IMR-90 (cell line): ENCODE measurements at regions of chr12 and their contacts with region 1.

Region 1: GRCh38 chr12:94187361-94187760 is 39.0 kb downstream of the PLXNC1 start:
- DNase-seq: no peak
- ATAC-seq: no peak
- H3K4me3 ChIP-seq: peak overlapping the region; percentile 4; the same call in 1 of the 2 replicates
- H3K27ac ChIP-seq: no peak overlapping the region
- H3K4me1 ChIP-seq: 0 out of 2 replicates have a peak, but pooled peaks cover 2% of the 10 kb centered on the region
- H3K27me3 ChIP-seq: peaks cover 24% of the 10 kb centered on the region
- CTCF ChIP-seq: no peak
- POLR2A ChIP-seq: no peak
- RAD21 ChIP-seq: no peak

Region 2: DNA sequence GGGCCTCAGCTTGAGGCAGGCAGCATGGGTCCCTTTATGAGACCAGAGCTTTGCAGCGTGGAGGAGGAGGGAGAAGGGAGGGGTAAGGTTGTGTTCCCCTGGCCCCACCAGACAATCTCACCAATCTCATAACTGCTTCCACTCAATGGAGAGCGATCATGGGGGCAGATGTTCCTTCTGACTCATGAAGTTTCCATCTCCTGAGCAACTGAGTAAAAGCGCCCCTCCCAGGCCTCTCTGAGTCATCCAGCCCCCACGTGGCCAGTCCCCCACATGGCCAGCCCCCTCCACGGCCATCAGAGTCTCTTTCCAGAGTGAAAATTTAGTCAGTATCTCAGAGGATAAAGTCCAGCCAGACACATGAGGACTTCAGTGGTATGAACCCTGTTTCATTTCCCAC is 78.2 kb before region 1 on chr12:
- CTCF ChIA-PET with region 1: no interaction called
- POLR2A ChIA-PET with region 1: no interaction called
- dilution Hi-C with region 1: no loop called
- in situ Hi-C with region 1: no loop called
- intact Hi-C with region 1: no loop called
- DNase-seq: peak; percentile 71
- ATAC-seq: peak; percentile 72
- H3K4me3 ChIP-seq: no peak overlapping the region
- H3K27ac ChIP-seq: no peak overlapping the region
- H3K4me1 ChIP-seq: peaks cover 1% of the 10 kb centered on the region; the same call in 1 of the 2 replicates
- H3K27me3 ChIP-seq: no peaks in the 10 kb centered on the region; the same call in 1 of the 2 replicates
- CTCF ChIP-seq: no peak
- POLR2A ChIP-seq: no peak
- RAD21 ChIP-seq: no peak

Region 3: DNA sequence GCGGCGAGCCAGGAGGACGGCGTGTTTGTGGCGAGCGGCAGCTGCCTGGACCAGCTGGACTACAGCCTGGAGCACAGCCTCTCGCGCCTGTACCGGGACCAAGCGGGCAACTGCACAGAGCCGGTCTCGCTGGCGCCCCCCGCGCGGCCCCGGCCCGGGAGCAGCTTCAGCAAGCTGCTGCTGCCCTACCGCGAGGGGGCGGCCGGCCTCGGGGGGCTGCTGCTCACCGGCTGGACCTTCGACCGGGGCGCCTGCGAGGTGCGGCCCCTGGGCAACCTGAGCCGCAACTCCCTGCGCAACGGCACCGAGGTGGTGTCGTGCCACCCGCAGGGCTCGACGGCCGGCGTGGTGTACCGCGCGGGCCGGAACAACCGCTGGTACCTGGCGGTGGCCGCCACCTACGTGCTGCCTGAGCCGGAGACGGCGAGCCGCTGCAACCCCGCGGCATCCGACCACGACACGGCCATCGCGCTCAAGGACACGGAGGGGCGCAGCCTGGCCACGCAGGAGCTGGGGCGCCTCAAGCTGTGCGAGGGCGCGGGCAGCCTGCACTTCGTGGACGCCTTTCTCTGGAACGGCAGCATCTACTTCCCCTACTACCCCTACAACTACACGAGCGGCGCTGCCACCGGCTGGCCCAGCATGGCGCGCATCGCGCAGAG is 38.1 kb before region 1 on chr12:
- CTCF ChIA-PET with region 1: no interaction called
- POLR2A ChIA-PET with region 1: no interaction called
- dilution Hi-C with region 1: no loop called
- in situ Hi-C with region 1: no loop called
- intact Hi-C with region 1: no loop called
- DNase-seq: peak; percentile 23
- ATAC-seq: peak; percentile 64
- H3K4me3 ChIP-seq: peak overlapping the region; percentile 67
- H3K27ac ChIP-seq: no peak overlapping the region
- H3K4me1 ChIP-seq: no peaks in the 10 kb centered on the region; the same call in none of the 2 replicates
- H3K27me3 ChIP-seq: peaks cover 88% of the 10 kb centered on the region
- CTCF ChIP-seq: 0 out of 2 replicates have a peak, but pooled peaks have one; percentile 18
- POLR2A ChIP-seq: no peak
- RAD21 ChIP-seq: no peak

Region 4: DNA sequence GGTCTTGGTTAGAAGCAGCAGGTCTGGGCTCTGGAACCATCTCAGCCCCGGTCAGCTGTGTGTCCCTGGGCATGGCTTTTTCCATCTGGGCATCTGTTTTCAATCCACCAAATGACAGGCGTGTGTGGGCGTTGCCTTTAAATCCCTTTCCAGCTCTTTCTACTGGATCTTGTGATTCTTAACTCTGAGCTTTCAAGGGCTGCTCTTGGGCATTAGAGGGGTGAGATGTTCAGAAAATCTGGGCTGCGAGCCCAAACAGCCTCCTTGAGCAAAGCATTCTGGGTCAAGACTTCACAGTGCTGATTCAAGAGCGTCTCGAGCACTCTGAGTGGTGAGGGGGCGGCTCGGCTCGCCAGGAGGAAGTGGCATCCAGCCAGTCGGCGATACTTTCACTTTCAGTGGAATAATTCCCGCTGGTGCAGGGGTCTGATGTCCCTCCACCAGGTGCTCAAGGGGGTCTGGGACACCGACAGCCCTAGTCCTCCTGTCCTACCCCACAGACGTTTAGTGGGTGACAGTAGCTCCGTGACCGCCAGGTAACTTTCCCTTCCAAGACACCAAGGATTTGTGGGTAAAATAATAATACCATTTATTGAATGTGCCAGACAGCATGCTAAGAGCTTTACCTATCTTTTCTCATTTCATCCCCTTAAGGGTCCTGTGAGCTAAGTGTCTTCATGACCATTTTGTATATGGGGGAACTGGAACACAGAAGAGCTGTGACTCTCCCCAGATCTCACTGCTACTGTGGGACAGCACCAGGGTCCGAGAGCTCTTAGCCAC is 75.1 kb after region 1 on chr12:
- CTCF ChIA-PET with region 1: no interaction called
- POLR2A ChIA-PET with region 1: no interaction called
- dilution Hi-C with region 1: no loop called
- in situ Hi-C with region 1: no loop called
- intact Hi-C with region 1: no loop called
- DNase-seq: peak; percentile 96
- ATAC-seq: peak; percentile 97
- H3K4me3 ChIP-seq: peak overlapping the region; percentile 51
- H3K27ac ChIP-seq: peak overlapping the region; percentile 88
- H3K4me1 ChIP-seq: peaks cover 8% of the 10 kb centered on the region
- H3K27me3 ChIP-seq: no peaks in the 10 kb centered on the region
- CTCF ChIP-seq: no peak
- POLR2A ChIP-seq: no peak
- RAD21 ChIP-seq: no peak

Region 5: DNA sequence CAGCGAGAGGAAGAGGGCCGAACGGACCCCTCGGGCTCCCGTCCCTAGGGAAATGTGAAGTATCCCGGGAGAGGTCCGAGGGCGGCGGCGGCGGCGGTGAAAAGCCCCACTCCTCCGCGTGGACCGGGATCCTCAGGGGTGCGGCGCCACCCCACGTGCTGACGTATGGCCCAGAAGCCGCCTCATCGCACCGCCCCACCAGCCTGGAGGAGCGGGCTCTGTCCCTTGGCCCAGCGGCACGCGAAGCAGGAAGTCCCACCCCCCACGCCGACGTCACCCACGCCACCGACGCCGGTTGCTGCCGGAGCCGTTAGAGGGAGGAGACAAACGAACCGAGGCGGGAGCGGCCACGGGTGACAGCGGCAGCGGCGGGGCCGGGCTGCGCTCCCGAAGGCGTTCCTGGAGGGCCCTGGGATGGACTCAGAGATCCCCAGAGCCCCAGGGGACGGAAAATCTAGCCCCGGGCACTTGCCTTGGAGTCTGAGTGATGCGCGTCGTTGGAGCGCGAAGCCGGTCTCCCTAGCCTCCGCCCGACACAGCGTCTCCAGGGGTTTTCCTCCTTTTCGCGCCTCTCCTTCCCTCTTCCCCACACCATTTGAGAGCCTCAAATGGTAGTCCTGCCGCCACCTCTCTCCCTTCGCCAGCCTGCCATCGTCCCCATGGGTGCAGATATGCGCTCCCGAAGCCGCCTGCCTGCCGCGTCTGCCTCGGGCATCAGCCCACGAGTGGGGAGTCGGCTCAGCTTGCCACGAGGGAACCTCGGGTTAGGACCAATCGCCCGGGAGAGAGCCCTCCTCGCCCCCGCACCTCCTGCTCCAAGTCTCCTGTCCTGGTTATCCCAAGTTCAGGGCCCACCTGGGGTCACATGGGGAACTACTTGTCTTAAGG is 272.6 kb after region 1 on chr12 and contains the start of gene CEP83:
- CTCF ChIA-PET with region 1: no interaction called
- POLR2A ChIA-PET with region 1: no interaction called
- dilution Hi-C with region 1: no loop called
- in situ Hi-C with region 1: no loop called
- intact Hi-C with region 1: no loop called
- DNase-seq: peak; percentile 90
- ATAC-seq: peak; percentile 99
- H3K4me3 ChIP-seq: peak within 1 kb of the TSS; percentile 73
- H3K27ac ChIP-seq: peak within 1 kb of the TSS; percentile 77
- H3K4me1 ChIP-seq: no peaks in the 10 kb centered on the region
- H3K27me3 ChIP-seq: no peaks in the 10 kb centered on the region
- CTCF ChIP-seq: no peak
- POLR2A ChIP-seq: peak; percentile 76
- RAD21 ChIP-seq: no peak
- total RNA-seq, gene CEP83: 3.9 and 8.9 TPM in 2 replicates

Region 6: DNA sequence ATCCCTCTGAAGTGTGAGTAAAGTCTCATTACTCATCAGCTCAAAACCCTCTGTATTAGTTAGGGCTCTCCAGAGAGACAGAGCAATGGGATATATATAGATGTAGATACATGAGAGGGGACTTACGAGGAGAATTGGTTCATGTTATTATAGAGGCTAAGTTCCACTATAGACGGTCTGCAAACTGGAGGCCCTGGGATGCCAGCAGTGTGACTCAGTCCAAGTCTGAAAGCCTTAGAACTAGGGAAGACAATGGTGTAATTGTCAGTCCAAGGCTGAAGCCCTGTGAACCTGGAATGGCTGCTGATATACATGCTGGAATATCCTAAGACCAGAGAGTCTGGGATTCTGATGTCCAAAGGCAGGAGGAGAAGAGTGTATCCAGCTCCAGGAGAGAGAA is 329.6 kb after region 1 on chr12:
- CTCF ChIA-PET with region 1: no interaction called
- POLR2A ChIA-PET with region 1: interaction called, 10 read pairs
- dilution Hi-C with region 1: no loop called
- in situ Hi-C with region 1: no loop called
- intact Hi-C with region 1: no loop called
- DNase-seq: peak; percentile 39
- ATAC-seq: no peak; the same call in 1 of the 2 replicates
- H3K4me3 ChIP-seq: no peak overlapping the region
- H3K27ac ChIP-seq: no peak overlapping the region
- H3K4me1 ChIP-seq: no peaks in the 10 kb centered on the region
- H3K27me3 ChIP-seq: no peaks in the 10 kb centered on the region; the same call in 1 of the 2 replicates
- CTCF ChIP-seq: no peak
- POLR2A ChIP-seq: no peak
- RAD21 ChIP-seq: no peak